ENCODE measurements at regions of chr6 and their contacts with region 1.

Region 1: GRCh38 chr6:5214570-5215052 is 46.1 kb downstream of the LYRM4 start:
- DNase-seq: peak; percentile 50
- ATAC-seq: peak; percentile 45
- H3K4me3 Mint-ChIP-seq: no peak overlapping the region
- H3K27ac Mint-ChIP-seq: no peak overlapping the region
- H3K4me1 Mint-ChIP-seq: peaks cover 9% of the 10 kb centered on the region
- H3K27me3 Mint-ChIP-seq: no peaks in the 10 kb centered on the region

Region 2: DNA sequence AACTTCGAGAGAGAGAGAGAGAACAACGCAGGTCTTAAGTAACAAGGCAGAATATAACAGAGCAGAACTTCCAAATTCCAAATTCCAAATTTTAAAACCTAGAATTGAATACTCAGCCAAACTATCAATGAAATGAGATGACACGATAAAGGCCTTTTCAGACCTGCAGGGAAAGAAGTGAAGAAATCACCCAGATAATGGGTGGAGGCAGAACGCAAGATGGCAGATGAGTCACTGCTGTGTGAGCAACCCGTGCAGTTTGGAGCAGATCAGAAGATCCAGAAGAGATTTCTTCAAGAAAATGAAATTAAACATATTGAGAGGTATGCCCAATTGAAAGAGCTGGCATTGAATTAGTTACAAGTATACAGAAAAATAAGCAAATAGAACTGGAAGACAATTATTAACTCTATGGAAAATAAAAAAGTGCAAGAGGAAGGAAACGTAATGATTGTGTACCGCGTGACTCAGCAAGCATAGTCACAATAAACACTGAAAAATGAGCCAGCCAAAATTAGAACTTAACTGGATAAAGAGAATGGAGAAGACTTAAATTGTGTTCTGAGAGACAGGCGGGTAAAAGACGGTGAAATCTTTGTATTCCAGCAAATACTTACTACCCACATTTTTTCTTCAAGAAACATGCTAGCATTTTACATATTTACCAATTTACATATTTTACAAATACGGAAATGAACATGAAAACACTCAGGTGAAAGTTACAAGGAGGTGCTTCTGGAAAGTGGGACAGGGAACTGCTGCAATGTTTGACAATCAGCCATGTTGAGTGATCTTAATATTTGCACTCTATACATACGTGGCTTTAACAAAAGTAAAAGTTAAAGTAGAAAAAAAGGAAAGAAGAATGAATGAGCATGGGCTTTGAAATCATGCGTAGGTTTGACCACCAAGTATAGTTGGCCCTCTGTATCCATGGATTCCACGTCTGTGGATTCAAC is 526.3 kb before region 1 on chr6:
- CTCF ChIA-PET with region 1: no interaction called
- DNase-seq: no peak
- ATAC-seq: no peak
- H3K4me3 Mint-ChIP-seq: no peak overlapping the region
- H3K27ac Mint-ChIP-seq: no peak overlapping the region
- H3K4me1 Mint-ChIP-seq: no peaks in the 10 kb centered on the region
- H3K27me3 Mint-ChIP-seq: peaks cover 4% of the 10 kb centered on the region

Region 3: GRCh38 chr6:5333658-5334057 is 119.0 kb after region 1 on chr6:
- CTCF ChIA-PET with region 1: no interaction called
- DNase-seq: no peak
- ATAC-seq: no peak
- H3K4me3 Mint-ChIP-seq: no peak overlapping the region
- H3K27ac Mint-ChIP-seq: no peak overlapping the region
- H3K4me1 Mint-ChIP-seq: peaks cover 16% of the 10 kb centered on the region
- H3K27me3 Mint-ChIP-seq: no peaks in the 10 kb centered on the region

Region 4: DNA sequence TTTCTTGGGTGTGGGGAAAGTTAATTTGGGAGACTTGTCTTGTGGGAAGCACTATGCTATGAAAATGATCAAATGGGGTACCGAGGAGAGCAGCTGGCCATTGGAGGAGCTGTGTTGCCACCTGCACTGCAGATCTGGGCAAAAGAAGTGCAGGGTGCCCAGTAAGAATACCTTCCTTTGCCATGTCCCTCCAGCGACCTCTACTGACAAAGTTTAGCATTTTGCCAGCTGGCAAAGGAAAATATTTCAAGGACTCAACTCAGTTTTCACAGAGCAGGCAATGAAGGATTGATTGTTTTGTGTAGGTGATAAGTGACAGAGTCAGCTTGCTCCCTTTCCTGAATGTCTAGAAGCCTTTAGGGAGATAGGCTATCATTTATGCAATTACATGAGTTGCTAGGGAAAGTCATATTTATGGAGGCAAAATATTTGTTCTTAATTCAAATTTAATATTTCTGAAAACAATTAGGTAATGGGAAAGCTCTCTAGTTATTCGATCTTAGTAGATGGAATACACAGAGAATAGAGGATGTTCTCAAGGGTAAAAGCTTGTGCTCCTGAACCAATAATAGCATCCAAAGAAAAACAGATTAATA is 165.1 kb after region 1 on chr6:
- CTCF ChIA-PET with region 1: interaction called, 13 read pairs
- DNase-seq: peak; percentile 58
- ATAC-seq: no peak
- H3K4me3 Mint-ChIP-seq: no peak overlapping the region
- H3K27ac Mint-ChIP-seq: no peak overlapping the region
- H3K4me1 Mint-ChIP-seq: peaks cover 2% of the 10 kb centered on the region
- H3K27me3 Mint-ChIP-seq: no peaks in the 10 kb centered on the region

Measured in activated CD8-positive, alpha-beta memory T cell treated with anti-CD3 and anti-CD28 coated beads, Interleukin-2, amount 10 ng/mL, durations not matched to agents 7 days and 5 days (primary cell).